Activated CD4-positive, alpha-beta T cell treated with anti-CD3 and anti-CD28 coated beads, Interleukin-2, amount 10 ng/mL, durations not matched to agents 24 days and 14 days (primary cell): ENCODE measurements at regions of chr11 and their contacts with region 1.

Region 1: DNA sequence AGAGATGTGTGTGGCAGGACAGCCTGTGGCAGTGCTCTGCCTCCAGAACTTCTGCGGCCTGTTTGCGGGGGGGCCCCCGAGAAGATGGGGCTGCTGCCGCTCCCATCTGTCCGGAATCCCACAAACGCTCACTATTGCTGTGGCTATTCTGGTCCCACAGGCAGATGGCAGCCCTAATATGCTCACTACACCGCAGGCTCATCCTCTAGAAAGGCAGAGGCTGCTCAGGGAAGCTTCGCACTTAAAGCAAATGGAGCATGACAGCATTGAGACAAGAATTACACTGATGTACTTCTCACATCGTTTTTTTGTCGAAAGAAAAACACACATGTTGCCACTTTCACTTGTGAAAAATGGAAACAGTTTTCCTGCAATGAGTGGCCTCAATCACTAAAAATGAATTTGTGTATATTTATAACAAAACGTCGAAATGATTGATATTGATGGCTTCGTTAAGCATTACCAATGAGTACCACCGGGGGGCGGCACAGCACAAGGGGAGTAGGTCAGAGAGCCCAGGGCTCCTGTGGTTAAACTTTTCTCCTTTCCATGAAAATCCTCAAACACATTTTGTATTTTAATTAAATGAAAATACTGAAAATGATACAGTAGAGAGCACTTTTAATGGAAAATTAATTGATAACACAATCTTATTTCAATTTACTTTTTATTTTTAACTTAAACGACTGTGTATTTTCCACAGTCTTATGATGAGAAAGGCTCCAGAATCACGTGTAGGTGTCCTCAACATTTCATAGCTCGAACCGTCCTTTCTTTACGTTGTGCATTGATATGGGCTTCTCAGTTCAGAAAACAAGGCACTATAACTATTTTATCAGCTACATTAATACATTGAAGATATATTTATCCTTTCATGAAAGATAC is 69.1 kb downstream of the CTTN start:
- DNase-seq: peak; percentile 83
- H3K4me3 Mint-ChIP-seq: no peak overlapping the region
- H3K27ac Mint-ChIP-seq: no peak overlapping the region
- H3K4me1 Mint-ChIP-seq: peaks cover 2% of the 10 kb centered on the region
- H3K27me3 Mint-ChIP-seq: peaks cover 7% of the 10 kb centered on the region

Region 2: DNA sequence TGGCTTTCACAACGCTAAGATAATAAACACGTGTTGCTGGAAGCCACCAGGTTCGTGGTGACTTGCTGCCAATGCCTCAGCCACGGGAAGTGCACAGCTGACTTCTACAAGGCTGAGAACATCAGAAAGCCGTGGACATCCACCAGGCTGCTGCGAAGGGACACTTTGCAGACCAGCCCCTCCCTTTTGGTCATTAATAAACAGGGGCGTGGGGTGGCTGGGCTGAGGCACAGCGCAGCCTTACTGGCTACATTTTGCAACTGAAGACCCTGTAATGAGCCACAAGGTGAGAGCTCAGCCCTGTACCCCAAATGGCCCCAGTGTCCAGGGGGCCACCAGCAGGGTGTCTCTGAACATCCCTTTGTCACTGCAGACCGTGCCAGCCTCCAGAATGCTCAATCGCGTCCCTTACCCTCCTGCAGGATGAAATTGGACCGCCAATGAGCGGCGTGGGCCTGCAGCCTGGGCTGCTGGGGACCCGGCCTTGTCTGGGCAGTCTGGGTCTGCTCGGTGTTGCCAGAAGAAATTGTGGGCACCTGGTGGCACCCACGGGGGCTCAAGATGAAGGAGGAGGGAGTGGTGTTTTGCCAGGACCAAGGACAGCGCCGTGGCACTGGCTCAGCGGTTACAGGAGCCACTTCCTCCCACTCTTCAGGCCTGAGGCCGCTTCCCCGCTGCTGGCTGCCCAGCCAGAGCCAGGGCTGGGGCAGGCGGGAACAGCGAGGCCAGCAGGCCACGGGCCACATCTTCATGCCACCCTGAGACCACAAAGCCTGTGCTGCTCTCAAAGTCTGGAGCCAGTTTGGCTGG is 112.8 kb after region 1 on chr11:
- intact Hi-C with region 1: no loop called
- DNase-seq: peak; percentile 57
- H3K4me3 Mint-ChIP-seq: no peak overlapping the region
- H3K27ac Mint-ChIP-seq: no peak overlapping the region
- H3K4me1 Mint-ChIP-seq: no peaks in the 10 kb centered on the region
- H3K27me3 Mint-ChIP-seq: no peaks in the 10 kb centered on the region

Region 3: DNA sequence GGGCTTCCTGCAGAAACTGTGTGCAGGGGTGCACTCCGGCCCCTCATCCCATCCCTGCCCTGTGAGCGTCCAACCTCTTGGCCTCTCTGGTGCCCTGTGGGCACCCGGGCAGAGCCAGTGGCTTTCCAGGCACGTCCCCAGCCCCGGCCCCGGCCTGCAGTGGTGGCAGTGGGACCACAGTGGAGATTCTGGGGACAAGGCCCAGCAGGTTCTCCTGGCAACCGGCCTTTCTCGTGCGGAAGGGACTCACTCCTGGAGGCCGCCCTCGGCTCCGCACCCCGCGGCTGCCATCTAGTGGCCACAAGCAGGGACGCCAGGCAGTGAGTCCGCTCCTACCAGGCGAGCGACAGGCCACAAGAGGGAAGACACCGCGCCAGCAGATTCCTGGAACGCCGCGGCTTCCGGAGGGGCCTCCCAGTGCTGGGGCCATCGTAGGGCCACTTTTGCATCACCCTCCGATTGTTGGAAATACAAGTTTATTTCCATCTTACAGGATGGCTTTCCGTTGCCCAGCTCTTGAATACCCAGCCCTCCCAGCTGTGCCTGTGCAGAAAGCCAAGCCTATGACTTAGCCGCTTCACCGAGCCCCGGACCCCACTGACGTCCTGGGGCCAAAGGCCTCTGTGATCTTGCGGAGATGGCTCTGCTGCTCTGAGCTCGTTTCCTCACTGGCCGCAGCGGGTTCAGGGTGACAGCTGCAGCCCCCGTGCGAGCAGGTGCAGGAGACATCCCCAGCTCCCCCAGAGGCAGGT is 288.1 kb after region 1 on chr11:
- intact Hi-C with region 1: loop called (anchors 5 kb)
- DNase-seq: peak; percentile 88
- H3K4me3 Mint-ChIP-seq: no peak overlapping the region
- H3K27ac Mint-ChIP-seq: no peak overlapping the region
- H3K4me1 Mint-ChIP-seq: no peaks in the 10 kb centered on the region
- H3K27me3 Mint-ChIP-seq: no peaks in the 10 kb centered on the region